Common myeloid progenitor, CD34-positive (primary cell): ENCODE measurements at regions of chr16 and their contacts with region 1.

Region 1: GRCh38 chr16:87853411-87854052 is 15.8 kb downstream of the SLC7A5 start:
- DNase-seq: peak; percentile 86 to 95 (median 93)
- H3K4me3 ChIP-seq: peak overlapping the region in 5 of 7 experiments; percentile 21 to 65 (median 54)
- H3K27ac ChIP-seq: peak overlapping the region; percentile 50 to 82
- H3K4me1 ChIP-seq: peaks cover 0 to 62% (median 40%) of the 10 kb centered on the region in 4 experiments
- H3K27me3 ChIP-seq: no peaks in the 10 kb centered on the region

Region 2: GRCh38 chr16:87733190-87733589 is 120.3 kb before region 1 on chr16:
- CTCF ChIA-PET with region 1: no interaction called
- POLR2A ChIA-PET with region 1: no interaction called
- DNase-seq: no peak
- H3K4me3 ChIP-seq: no peak overlapping the region
- H3K27ac ChIP-seq: no peak overlapping the region
- H3K4me1 ChIP-seq: no peaks in the 10 kb centered on the region
- H3K27me3 ChIP-seq: no peaks in the 10 kb centered on the region

Region 3: GRCh38 chr16:87834623-87835407 is 18.7 kb before region 1 on chr16:
- CTCF ChIA-PET with region 1: interaction called, 61 read pairs
- POLR2A ChIA-PET with region 1: interaction called, 3 read pairs
- DNase-seq: no peak
- H3K4me3 ChIP-seq: no peak overlapping the region
- H3K27ac ChIP-seq: no peak overlapping the region
- H3K4me1 ChIP-seq: peaks cover 0 to 11% (median 4%) of the 10 kb centered on the region in 4 experiments
- H3K27me3 ChIP-seq: no peaks in the 10 kb centered on the region

Region 4: GRCh38 chr16:87864331-87864989 is 10.9 kb after region 1 on chr16:
- CTCF ChIA-PET with region 1: interaction called, 129 read pairs
- POLR2A ChIA-PET with region 1: interaction called, 7 read pairs
- DNase-seq: no peak
- H3K4me3 ChIP-seq: no peak overlapping the region
- H3K27ac ChIP-seq: no peak overlapping the region
- H3K4me1 ChIP-seq: peaks cover 0 to 52% (median 27%) of the 10 kb centered on the region in 4 experiments
- H3K27me3 ChIP-seq: no peaks in the 10 kb centered on the region

Region 5: GRCh38 chr16:87877938-87878507 is 24.5 kb after region 1 on chr16:
- CTCF ChIA-PET with region 1: interaction called, 129 read pairs
- POLR2A ChIA-PET with region 1: no interaction called
- DNase-seq: no peak
- H3K4me3 ChIP-seq: no peak overlapping the region
- H3K27ac ChIP-seq: no peak overlapping the region
- H3K4me1 ChIP-seq: peaks cover 0 to 18% (median under 1%) of the 10 kb centered on the region in 4 experiments
- H3K27me3 ChIP-seq: peaks cover 0 to 20% (median 3%) of the 10 kb centered on the region in 5 experiments

Region 6: GRCh38 chr16:87924422-87925298 is 71.1 kb after region 1 on chr16:
- CTCF ChIA-PET with region 1: no interaction called
- POLR2A ChIA-PET with region 1: no interaction called
- DNase-seq: no peak
- H3K4me3 ChIP-seq: no peak overlapping the region
- H3K27ac ChIP-seq: no peak overlapping the region
- H3K4me1 ChIP-seq: peaks cover 0 to 14% (median 4%) of the 10 kb centered on the region in 4 experiments
- H3K27me3 ChIP-seq: peaks cover 0 to 11% (median 0%) of the 10 kb centered on the region in 5 experiments

Region 7: DNA sequence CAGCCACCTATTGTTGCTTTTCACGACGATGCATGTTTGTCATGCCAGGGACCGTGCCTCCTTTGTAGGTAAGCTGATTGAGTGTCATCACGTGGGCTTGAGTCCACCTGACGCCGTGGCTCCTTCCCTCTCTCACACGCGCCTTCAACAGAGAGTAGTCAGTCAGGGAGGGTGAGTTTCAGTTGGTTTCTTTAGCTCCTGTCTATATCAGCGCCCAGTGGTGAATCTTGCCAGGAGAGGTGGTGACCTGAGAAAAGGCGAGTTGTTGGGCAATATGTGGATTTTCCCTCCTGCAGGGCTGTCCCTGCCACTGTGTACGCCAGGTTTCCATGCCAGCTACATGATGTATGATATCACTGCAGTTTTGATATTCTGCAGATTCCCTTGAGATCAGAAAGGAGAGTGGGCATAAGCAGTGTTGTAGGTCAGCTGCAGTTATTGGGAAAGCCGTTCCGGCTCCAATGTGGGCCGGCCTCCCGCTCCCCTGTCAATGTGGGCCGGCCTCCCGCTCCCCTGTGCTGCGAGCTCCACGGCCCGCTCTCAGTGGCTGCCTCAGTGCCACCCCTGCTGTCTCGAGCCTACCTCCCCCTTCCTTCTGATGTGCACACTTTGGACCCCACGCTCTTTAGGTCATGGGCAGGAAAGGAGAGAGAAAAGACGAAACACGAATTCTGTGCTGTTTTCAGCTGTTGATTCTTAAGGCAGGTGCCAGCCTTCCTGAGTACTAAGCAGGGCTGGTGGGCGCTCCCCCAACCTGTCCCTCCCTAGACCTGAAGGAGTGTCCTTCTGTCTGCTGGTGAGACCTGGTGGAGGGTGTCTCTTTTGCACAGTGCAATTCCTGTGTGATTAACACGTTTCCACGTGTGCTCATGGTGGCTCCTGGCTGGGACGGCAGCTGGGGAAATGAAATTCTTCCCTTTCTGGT is 129.2 kb after region 1 on chr16:
- CTCF ChIA-PET with region 1: no interaction called
- POLR2A ChIA-PET with region 1: no interaction called
- DNase-seq: no peak
- H3K4me3 ChIP-seq: no peak overlapping the region
- H3K27ac ChIP-seq: no peak overlapping the region
- H3K4me1 ChIP-seq: no peaks in the 10 kb centered on the region
- H3K27me3 ChIP-seq: no peaks in the 10 kb centered on the region